AG04449 (cell line): ENCODE measurements at regions of chr2 and their contacts with region 1.

Region 1: GRCh38 chr2:187453078-187453641 is 5.1 kb upstream of the CALCRL start:
- DNase-seq: no peak
- H3K4me3 ChIP-seq: no peak overlapping the region
- CTCF ChIP-seq: peak; percentile 17

Region 2: GRCh38 chr2:186903216-186903615 is 549.9 kb before region 1 on chr2:
- CTCF ChIA-PET with region 1: interaction called, 15 read pairs
- POLR2A ChIA-PET with region 1: no interaction called
- DNase-seq: no peak
- H3K4me3 ChIP-seq: no peak overlapping the region
- CTCF ChIP-seq: peak; percentile 6